Right cardiac atrium (tissue), 5 donors: ENCODE measurements at regions of chr2 and their contacts with region 1.

Region 1: GRCh38 chr2:155815886-155816285 is 516.6 kb downstream of the NR4A2 start:
- DNase-seq: no peak
- ATAC-seq: no peak
- H3K4me3 ChIP-seq: no peak overlapping the region
- H3K27ac ChIP-seq: no peak overlapping the region
- H3K4me1 ChIP-seq: no peaks in the 10 kb centered on the region
- H3K27me3 ChIP-seq: no peaks in the 10 kb centered on the region

Region 2: GRCh38 chr2:155930312-155930711 is 114.4 kb after region 1 on chr2:
- intact Hi-C with region 1: loop called in 1 of 4 experiments (anchors 10 kb)
- DNase-seq: no peak
- ATAC-seq: no peak
- H3K4me3 ChIP-seq: no peak overlapping the region
- H3K27ac ChIP-seq: no peak overlapping the region
- H3K4me1 ChIP-seq: no peaks in the 10 kb centered on the region
- H3K27me3 ChIP-seq: no peaks in the 10 kb centered on the region